AG04449 (cell line): ENCODE measurements at regions of chr14 and their contacts with region 1.

Region 1: DNA sequence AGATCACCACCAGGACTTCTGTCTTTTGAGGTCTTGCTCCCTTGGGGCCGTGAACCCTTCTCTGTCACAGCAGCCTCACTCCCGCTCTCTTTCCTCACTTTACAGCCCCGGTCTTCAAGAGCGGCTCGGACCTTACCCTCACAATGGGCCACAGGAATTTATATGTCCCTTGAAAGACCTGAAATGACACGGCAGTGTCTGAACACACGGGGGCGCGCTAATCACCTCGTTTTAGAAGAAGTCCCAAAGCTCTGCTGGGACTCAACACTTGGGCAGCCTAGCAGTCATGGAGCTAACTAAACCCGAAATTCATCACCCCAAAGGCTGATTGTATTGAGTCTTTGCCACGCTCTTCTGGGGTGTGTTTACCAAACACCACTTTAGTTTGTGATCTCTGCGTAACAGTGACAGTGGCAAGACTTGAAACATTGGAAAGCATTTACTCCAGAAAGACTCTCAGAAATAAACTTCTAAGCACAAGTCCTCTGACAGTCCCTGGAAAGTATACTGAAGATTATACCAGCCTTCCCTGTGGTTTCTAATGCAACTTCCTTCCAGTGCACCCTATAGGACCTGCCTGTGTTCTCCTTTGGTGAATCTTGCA is 29.0 kb downstream of the SERPINA11 start:
- DNase-seq: no peak
- H3K4me3 ChIP-seq: no peak overlapping the region
- CTCF ChIP-seq: peak; percentile 65

Region 2: DNA sequence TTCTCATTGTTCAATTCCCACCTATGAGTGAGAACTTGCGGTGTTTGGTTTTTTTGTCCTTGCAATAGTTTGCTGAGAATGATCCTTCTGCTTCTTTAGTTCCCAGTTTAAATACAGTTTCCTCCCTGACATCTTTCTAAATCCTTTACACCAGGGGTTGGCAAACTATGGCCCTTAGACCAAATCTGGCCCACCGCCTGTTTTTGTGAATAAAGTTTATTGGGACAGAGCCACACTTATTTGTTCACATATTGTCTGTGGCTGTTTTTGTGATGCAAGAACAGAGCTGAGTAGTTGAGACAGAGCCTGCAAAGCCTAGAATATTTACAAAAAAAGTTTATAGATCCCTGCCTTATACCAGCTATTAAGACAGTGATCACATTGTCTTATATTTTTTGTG is 184.1 kb before region 1 on chr14:
- CTCF ChIA-PET with region 1: no interaction called
- POLR2A ChIA-PET with region 1: no interaction called
- DNase-seq: no peak
- H3K4me3 ChIP-seq: no peak overlapping the region
- CTCF ChIP-seq: no peak

Region 3: DNA sequence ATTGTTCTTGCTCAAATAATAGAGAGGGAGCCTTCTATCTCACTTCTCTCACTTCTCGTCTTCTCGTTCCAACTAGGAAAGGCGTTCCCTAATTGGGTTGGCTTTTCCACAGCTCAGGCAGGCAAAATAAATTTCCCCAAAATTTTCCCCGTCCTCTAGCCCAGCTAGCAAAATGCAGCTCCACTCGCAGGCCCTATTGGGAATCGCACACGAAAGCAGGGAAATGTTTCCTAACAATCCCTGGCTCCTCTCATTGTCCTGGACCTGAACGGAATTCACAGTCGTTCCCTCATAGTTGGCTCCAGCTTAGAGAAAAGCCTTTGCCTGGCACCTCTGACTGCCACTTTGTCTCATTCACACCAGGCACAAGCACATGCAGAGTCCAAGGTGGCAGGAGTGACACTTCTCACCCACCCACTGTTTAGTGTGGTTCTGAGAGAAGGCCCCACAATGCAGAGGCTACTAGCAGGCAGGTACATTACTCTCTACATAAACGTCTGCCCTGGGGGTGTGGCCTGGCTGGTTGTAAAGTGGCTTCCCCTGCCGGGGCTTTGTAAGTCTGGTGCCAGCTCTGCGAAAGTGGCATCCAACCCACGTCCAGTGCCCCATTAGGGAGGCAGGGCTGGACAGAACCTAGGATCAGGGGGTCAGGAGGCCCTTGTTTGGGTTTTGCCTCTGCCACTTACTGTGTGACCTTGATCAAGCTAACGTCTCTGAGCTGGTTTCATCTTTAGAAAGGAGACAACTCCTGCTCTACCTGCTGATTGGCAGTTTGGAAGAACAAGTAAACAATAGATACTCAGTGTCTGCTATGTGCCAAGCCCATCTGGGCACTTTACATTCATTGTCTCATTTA is 134.7 kb before region 1 on chr14:
- CTCF ChIA-PET with region 1: no interaction called
- POLR2A ChIA-PET with region 1: no interaction called
- DNase-seq: no peak
- H3K4me3 ChIP-seq: no peak overlapping the region
- CTCF ChIP-seq: no peak

Region 4: DNA sequence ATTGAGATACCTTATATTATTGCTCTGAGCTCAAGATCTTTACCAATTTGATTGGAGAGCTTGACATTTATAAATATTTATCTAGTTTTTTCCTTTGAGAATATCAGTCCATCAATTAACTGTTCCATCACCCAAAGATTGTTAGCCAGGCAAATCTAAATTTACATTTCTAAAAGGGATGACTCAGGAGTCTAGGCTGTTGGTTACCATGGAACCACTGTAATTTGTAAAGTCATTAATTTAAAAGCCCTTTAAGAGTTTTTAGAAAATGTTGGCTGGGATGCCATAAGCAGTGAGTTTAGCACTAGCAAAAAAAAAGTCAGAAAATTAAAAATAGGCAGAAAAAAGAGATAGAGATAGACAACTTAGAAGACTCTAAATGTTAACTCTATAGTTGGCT is 15.6 kb before region 1 on chr14:
- CTCF ChIA-PET with region 1: interaction called, 35 read pairs
- POLR2A ChIA-PET with region 1: no interaction called
- DNase-seq: no peak
- H3K4me3 ChIP-seq: no peak overlapping the region
- CTCF ChIP-seq: no peak

Region 5: DNA sequence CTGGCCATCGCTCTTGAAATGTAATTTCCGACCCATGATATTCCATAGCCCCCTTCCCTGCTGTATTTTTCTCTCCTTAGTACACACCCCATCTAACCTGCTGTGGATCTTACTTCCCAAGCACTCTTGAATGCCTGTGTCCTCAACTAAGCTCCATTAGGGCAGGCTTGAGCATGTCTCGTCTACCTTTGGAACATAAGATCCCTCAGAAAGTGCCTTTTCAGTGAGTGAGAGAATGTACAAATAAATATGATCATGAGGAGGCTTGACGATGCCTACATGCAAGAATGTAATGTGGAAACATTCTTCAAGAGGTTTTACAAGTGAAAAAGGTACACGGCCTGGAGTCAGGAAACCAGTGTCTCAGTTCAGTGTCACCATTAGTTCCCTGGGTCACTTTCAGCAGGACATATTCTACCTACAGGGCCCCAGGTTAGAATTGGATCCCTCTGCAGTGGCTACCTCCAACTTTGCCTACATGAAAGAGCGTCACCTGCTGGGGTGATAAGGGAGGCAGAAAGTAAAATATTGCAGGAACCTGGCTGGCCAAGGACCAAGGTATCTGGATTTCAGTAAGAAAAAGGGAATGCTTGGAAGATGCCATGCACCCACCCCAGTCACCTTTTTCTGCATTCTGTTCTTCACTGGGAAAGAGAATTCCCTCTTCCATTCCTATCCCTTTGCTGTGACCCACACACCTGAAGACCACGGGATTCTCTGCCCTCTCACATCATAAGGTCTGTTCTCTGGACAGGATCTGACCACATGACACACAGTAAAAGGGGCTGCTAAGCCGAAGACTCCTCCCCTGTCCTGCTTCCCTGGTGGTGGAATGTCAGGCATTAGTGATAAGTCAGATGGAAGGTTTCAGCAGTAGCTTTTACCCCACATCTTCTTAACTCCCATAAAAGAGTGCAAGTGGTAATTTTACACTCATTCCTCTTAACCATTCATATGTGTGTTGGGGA is 10.6 kb before region 1 on chr14:
- CTCF ChIA-PET with region 1: interaction called, 35 read pairs
- POLR2A ChIA-PET with region 1: no interaction called
- DNase-seq: no peak
- H3K4me3 ChIP-seq: no peak overlapping the region
- CTCF ChIP-seq: peak; percentile 23

Region 6: DNA sequence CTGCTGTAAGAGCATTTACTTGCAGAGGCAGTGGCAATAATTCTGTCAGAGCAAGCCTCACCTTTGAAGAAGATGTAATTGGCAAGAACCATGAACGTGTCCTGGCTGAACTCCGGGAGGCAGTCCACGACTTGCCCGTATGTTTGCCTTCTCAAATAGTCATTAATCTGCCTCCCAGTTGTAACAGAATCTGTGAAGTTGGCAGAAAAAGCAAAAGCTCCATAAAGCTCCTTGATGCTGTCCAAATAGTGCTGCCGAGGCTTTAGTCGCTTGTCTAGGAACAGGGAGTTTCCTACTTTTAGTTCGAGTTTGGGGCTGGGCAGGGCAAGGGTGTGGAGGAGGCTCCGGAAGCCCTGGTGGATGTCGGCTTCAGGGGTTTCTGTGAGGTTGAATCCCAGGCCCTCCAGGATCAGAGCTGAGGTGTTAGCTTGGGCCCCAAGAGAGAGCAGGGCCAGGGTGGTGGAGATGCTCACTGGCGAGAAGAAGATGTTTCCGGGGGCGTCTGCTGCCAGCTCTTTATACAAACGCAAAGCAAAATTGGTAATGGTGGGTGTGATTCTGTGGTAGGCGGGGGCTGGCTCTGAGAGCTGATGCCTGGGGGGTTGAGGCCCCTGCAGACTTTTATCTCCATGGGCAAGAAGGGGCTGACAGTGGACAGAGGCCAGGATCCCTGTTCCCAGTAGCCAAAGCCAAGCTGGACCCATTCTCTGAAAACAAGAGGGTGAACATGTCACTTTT is 24.7 kb after region 1 on chr14:
- CTCF ChIA-PET with region 1: interaction called, 10 read pairs
- POLR2A ChIA-PET with region 1: no interaction called
- DNase-seq: no peak
- H3K4me3 ChIP-seq: no peak overlapping the region
- CTCF ChIP-seq: no peak

Region 7: DNA sequence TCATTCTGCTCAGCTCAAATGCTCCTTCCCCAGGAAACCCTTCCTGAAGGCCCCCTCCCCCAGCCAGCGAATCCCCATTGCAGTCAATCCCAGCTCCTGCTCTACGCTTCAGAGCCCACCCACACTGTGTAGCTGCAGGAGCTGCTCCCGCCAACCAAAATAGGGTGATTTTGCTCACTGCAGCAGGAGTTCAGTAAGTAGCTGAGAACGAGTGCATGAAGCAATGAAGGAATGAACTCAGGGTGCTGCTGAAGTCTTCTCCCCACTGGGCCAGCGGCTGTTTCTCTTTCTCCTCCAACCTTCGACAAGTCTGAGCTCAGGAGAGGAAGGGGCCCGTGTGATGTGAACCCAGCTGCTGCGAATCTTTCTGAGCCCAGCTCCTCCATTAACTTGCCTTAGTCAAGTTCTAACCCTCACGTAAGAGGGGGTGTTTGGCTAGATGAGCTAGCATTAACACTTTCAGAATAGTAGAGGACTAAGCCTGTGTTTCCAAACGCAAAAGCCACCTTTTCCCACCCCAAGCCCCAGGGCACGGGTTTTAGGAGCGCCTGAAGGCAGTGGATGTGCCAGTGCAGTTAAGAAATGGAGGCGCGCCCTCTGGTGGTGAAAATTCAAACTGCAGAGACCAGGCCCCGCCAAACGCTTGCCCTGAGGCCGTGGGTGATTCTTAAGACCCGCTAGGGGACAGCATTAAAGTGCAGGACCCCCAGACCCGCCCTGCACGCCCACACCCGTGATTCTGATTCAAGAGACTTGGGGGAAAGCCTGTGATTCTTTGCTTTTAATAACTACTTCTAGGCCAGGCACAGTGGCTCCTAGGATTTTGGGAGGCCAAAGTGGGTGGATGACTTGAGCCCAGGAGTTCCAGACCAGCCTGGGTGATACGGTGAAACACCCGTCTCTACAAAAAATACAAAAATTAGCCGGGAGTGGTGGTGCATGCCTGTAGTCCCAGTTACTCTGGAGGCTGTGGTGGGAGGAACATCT is 125.7 kb after region 1 on chr14:
- CTCF ChIA-PET with region 1: interaction called, 21 read pairs
- POLR2A ChIA-PET with region 1: no interaction called
- DNase-seq: no peak
- H3K4me3 ChIP-seq: no peak overlapping the region
- CTCF ChIP-seq: peak; percentile 83